H1 (cell line): ENCODE measurements at regions of chr3 and their contacts with region 1.

Region 1: DNA sequence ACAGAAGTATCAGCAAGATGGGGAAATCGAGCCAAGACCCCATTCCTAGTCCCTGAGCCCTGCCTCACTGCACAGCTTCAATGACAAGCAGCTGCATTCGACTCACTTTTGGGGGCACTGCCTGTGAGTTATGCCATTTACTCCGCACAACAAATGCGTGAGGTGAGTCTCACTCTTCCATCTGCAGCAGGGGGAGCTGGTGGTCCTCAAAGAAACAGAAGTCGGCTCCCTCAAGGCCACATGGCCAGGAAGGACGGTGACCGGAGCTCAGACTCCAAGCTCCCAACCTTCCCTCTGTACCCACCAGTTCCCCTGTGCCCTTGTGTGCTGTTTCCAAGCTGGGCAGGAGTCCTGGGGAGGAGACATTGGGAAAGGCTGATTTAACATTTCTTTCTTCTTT is 127.7 kb upstream of the IQSEC1 start:
- DNase-seq: peak in 1 of 2 experiments; percentile 19
- H3K4me3 ChIP-seq: no peak overlapping the region
- H3K27ac ChIP-seq: no peak overlapping the region
- H3K4me1 ChIP-seq: peaks cover 0 to 3% (median under 1%) of the 10 kb centered on the region in 4 experiments; a peak in 5 of 7 replicates
- H3K27me3 ChIP-seq: peaks cover 0 to 4% (median 3%) of the 10 kb centered on the region in 4 experiments; a peak in 4 of 7 replicates
- CTCF ChIP-seq: peak in 2 of 3 experiments; percentile 71 to 72; a peak in 3 of 4 replicates
- EP300 ChIP-seq: no peak
- POLR2A ChIP-seq: no peak
- RAD21 ChIP-seq: peak; percentile 81 to 85

Region 2: GRCh38 chr3:13186435-13186815 is 14.5 kb before region 1 on chr3:
- CTCF ChIA-PET with region 1: interaction called, 17 read pairs
- POLR2A ChIA-PET with region 1: no interaction called
- DNase-seq: no peak
- H3K4me3 ChIP-seq: no peak overlapping the region
- H3K27ac ChIP-seq: no peak overlapping the region
- H3K4me1 ChIP-seq: peaks cover 0 to 2% (median 0%) of the 10 kb centered on the region in 4 experiments; a peak in 1 of 7 replicates
- H3K27me3 ChIP-seq: no peaks in the 10 kb centered on the region
- CTCF ChIP-seq: no peak
- EP300 ChIP-seq: no peak
- POLR2A ChIP-seq: no peak
- RAD21 ChIP-seq: no peak

Region 3: DNA sequence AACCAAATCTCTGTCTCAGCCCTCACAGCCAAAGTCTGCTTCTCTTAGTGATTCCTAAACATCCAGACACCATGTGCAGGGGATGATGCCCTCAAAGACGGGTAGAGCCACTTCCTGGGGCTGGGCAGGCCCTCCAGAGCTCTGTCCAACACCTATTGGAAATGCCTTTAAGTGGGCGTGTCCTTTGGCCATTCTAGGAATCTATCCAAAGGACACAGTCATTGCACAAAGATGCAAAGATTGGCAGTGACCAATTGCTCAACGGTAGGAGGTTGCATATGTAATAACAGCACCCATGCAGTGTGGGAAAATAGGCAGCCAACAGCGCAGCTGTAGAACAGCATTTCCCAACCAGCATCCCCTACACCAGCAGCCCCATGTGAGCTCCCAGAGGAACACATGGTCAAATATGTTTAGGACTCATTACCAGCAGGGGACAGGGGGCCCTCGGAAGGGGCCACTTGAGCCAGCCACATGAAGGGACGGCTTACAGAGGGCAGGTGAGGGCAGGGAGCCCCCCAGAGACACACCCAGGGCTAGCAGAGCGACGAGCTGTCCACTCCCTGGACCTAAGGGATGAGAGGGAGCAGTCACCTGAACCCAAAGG is 15.1 kb after region 1 on chr3:
- CTCF ChIA-PET with region 1: interaction called, 20 read pairs
- POLR2A ChIA-PET with region 1: no interaction called
- DNase-seq: no peak
- H3K4me3 ChIP-seq: no peak overlapping the region
- H3K27ac ChIP-seq: no peak overlapping the region
- H3K4me1 ChIP-seq: peaks cover 0 to 10% (median 2%) of the 10 kb centered on the region in 4 experiments; a peak in 3 of 7 replicates
- H3K27me3 ChIP-seq: no peaks in the 10 kb centered on the region
- CTCF ChIP-seq: no peak
- EP300 ChIP-seq: no peak
- POLR2A ChIP-seq: no peak
- RAD21 ChIP-seq: no peak